Activated CD4-positive, alpha-beta memory T cell treated with anti-CD3 and anti-CD28 coated beads, Interleukin-2, amount 10 ng/mL, durations not matched to agents 7 days and 5 days (primary cell): ENCODE measurements at regions of chr1 and their contacts with region 1.

Region 1: GRCh38 chr1:151006327-151007052 is at the start of gene MINDY1:
- DNase-seq: peak; percentile 46
- H3K4me3 Mint-ChIP-seq: peak within 1 kb of the TSS; percentile 93
- H3K27ac Mint-ChIP-seq: peak within 1 kb of the TSS; percentile 83
- H3K4me1 Mint-ChIP-seq: peaks cover 83% of the 10 kb centered on the region
- H3K27me3 Mint-ChIP-seq: no peaks in the 10 kb centered on the region
- total RNA-seq, gene MINDY1: 19.9 to 20.5 TPM

Region 2: DNA sequence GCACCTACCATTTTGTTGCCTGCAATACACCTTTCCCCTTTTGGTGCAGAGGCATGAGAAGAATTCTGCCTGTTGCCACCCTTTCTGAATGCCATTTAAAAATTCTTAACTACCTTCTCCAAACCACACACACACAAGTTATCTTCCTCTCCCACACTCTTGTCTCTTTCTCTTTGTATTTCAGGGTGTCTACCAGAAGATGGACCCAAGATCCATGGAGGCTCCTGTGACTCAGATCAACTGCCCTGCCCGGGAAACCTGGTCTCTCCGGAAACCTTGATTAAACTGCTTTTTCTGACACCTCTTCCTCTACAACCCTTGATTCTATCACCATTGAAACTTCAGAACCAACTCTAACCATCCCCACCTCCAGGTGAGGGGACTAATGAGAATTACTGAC is 521.6 kb before region 1 on chr1:
- CTCF ChIA-PET with region 1: no interaction called
- POLR2A ChIA-PET with region 1: no interaction called
- DNase-seq: no peak
- H3K4me3 Mint-ChIP-seq: no peak overlapping the region
- H3K27ac Mint-ChIP-seq: no peak overlapping the region
- H3K4me1 Mint-ChIP-seq: peaks cover 23% of the 10 kb centered on the region
- H3K27me3 Mint-ChIP-seq: peaks cover 1% of the 10 kb centered on the region

Region 3: DNA sequence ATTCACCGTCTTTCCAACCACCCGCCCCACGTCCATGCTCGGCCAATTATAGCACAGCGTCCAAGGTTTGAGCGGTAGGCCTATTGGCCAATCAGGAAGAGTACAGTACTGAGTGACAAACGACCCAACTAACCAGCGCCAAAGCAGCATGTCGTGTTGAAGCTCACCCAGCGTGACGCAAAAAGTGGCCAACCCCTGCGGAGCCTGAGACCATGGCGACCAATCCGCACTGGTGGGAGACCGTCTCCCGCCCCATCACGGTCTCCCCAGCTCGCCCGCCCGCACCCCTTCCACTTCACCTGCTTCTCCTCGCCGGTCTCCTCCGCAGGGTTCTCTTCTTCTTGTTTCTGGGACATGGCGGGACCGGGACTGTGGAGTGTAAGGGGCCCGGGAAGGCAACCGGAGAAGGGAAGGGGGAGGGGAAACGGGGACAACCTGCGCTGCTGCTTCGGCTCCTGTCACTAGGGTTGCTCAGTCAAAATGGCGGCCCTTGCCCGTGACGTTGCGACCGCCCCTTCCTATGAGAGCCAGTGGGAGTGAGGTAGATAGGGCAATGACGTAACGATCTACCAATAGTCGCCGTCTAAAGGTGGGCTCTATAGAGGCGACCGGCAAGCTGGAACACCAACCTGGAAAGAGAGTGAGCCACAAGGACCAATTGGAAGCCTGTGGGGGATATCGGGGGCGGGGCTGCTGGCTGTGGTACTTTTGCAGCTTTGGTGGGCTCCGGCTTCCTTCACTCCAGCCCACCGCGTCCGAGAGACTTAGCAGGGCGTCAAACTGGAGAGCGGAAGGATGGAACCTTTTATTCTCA is 377.2 kb before region 1 on chr1 and contains the start of gene ENSA:
- CTCF ChIA-PET with region 1: no interaction called
- POLR2A ChIA-PET with region 1: interaction called, 13 read pairs
- DNase-seq: peak; percentile 97
- H3K4me3 Mint-ChIP-seq: no peak within 1 kb of the TSS
- H3K27ac Mint-ChIP-seq: no peak within 1 kb of the TSS
- H3K4me1 Mint-ChIP-seq: peaks cover 28% of the 10 kb centered on the region
- H3K27me3 Mint-ChIP-seq: no peaks in the 10 kb centered on the region
- total RNA-seq, gene ENSA: 221 to 223 TPM

Region 4: DNA sequence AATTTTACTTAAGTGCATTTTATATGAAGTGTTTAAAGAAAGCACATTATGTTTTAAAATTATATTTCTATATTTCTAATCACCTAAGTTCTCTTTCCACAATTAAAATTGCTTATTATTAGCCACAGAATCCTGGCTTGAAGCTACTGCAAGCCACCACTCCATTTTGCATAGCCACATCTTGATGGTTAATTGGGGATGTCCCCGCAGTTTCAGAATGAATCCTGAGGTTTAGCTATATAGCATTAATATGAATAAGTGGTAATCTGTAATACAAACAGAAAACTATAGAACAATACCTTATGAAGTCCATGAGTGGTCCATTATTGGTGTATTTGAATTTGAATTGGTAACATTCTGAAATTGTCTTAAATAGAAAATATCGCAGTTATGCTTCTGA is 297.9 kb before region 1 on chr1:
- CTCF ChIA-PET with region 1: no interaction called
- POLR2A ChIA-PET with region 1: no interaction called
- DNase-seq: no peak
- H3K4me3 Mint-ChIP-seq: no peak overlapping the region
- H3K27ac Mint-ChIP-seq: no peak overlapping the region
- H3K4me1 Mint-ChIP-seq: peaks cover 1% of the 10 kb centered on the region
- H3K27me3 Mint-ChIP-seq: peaks cover 6% of the 10 kb centered on the region

Region 5: DNA sequence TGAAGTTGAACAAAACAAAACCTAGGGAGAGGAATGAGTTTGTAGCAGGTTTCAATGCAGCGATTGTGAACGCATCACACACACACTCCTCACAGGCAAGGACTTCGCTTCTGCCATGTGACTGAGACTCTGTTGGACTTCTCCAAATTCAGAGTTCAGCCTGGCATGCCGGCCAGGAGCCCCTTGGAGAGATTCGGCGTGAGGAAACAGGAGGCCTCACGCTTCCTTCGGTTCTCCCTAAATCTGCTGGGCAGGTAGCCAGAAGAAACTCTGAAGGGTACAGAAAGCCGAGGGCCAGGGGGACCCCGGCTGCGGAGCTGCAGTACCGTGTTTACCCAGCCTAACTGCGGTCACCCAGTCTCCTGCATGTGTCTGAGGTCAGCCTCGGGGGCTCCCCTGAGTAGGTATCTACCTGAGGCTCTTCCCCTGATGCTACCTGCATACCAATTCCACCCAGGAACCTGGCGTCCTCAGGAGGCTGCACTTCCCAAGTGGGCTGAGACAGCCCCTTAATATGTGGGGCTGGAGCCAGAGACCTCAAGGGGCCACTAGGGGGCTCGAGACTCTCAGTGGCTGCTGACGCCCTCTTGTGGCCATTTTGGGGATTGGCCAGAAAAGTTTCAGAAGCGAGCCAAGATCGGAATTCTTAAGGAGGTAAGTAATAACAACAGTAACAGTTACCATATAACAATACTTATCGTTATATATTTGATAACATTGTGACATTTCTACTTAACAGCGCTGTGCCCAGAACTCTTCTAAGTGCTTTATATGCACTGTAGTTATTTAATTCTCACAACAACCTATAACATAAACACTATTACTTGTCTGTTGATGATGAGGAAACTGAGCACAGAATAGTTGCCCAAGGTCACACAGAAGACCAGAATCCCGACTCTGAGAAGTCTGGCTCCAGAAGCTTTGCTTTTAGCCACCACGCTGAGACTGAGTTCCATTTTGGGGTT is 27.1 kb before region 1 on chr1:
- CTCF ChIA-PET with region 1: interaction called, 16 read pairs
- POLR2A ChIA-PET with region 1: interaction called, 21 read pairs
- DNase-seq: peak; percentile 90
- H3K4me3 Mint-ChIP-seq: no peak overlapping the region
- H3K27ac Mint-ChIP-seq: peak overlapping the region; percentile 40
- H3K4me1 Mint-ChIP-seq: peaks cover 38% of the 10 kb centered on the region
- H3K27me3 Mint-ChIP-seq: no peaks in the 10 kb centered on the region

Region 6: GRCh38 chr1:150995896-150996295 is 10.6 kb before region 1 on chr1:
- CTCF ChIA-PET with region 1: interaction called, 56 read pairs
- POLR2A ChIA-PET with region 1: interaction called, 14 read pairs
- DNase-seq: peak; percentile 37
- H3K4me3 Mint-ChIP-seq: no peak overlapping the region
- H3K27ac Mint-ChIP-seq: no peak overlapping the region
- H3K4me1 Mint-ChIP-seq: peaks cover 4% of the 10 kb centered on the region
- H3K27me3 Mint-ChIP-seq: no peaks in the 10 kb centered on the region

Region 7: DNA sequence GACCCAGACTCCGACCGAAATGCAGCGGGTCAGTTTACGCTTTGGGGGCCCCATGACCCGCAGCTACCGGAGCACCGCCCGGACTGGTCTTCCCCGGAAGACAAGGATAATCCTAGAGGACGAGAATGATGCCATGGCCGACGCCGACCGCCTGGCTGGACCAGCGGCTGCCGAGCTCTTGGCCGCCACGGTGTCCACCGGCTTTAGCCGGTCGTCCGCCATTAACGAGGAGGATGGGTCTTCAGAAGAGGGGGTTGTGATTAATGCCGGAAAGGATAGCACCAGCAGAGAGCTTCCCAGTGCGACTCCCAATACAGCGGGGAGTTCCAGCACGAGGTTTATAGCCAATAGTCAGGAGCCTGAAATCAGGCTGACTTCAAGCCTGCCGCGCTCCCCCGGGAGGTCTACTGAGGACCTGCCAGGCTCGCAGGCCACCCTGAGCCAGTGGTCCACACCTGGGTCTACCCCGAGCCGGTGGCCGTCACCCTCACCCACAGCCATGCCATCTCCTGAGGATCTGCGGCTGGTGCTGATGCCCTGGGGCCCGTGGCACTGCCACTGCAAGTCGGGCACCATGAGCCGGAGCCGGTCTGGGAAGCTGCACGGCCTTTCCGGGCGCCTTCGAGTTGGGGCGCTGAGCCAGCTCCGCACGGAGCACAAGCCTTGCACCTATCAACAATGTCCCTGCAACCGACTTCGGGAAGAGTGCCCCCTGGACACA is 41.6 kb after region 1 on chr1:
- CTCF ChIA-PET with region 1: interaction called, 3 read pairs
- POLR2A ChIA-PET with region 1: interaction called, 14 read pairs
- DNase-seq: peak; percentile 65
- H3K4me3 Mint-ChIP-seq: peak overlapping the region; percentile 82
- H3K27ac Mint-ChIP-seq: peak overlapping the region; percentile 79
- H3K4me1 Mint-ChIP-seq: peaks cover 57% of the 10 kb centered on the region
- H3K27me3 Mint-ChIP-seq: no peaks in the 10 kb centered on the region

Region 8: GRCh38 chr1:151059078-151059907 is 52.8 kb after region 1 on chr1 and contains the start of gene CDC42SE1:
- CTCF ChIA-PET with region 1: interaction called, 3 read pairs
- POLR2A ChIA-PET with region 1: interaction called, 35 read pairs
- DNase-seq: peak; percentile 87
- H3K4me3 Mint-ChIP-seq: peak within 1 kb of the TSS; percentile 97
- H3K27ac Mint-ChIP-seq: peak within 1 kb of the TSS; percentile 97
- H3K4me1 Mint-ChIP-seq: peaks cover 51% of the 10 kb centered on the region
- H3K27me3 Mint-ChIP-seq: no peaks in the 10 kb centered on the region
- total RNA-seq, gene CDC42SE1: 345 to 347 TPM